Dorsolateral prefrontal cortex (tissue), 120 donors: ENCODE measurements at regions of chr6 and their contacts with region 1.

Region 1: GRCh38 chr6:33454009-33454946 is at the start of gene ZBTB9:
- DNase-seq: peak; percentile 95 to 99 (median 96)
- H3K4me3 ChIP-seq: peak within 1 kb of the TSS; percentile 54 to 99 (median 88)
- H3K27ac ChIP-seq: peak within 1 kb of the TSS in 57 of 59 donors; percentile 7 to 90 (median 73)
- H3K27me3 ChIP-seq: no peaks in the 10 kb centered on the region
- CTCF ChIP-seq: peak in 39 of 56 donors; percentile 9 to 59 (median 32)
- total RNA-seq, gene ZBTB9: 1.9 to 15.2 (median 6.9) TPM

Region 2: GRCh38 chr6:33075568-33076405 is 378.5 kb before region 1 on chr6 and contains the start of gene HLA-DPB1:
- intact Hi-C with region 1: no loop called
- DNase-seq: peak in 1 of 10 donors; percentile 15
- H3K4me3 ChIP-seq: peak within 1 kb of the TSS in 55 of 59 donors; percentile 5 to 61 (median 40)
- H3K27ac ChIP-seq: peak within 1 kb of the TSS in 39 of 59 donors; percentile 10 to 80 (median 50)
- H3K27me3 ChIP-seq: peaks cover 0 to 44% (median 0%) of the 10 kb centered on the region in 45 donors
- CTCF ChIP-seq: no peak
- total RNA-seq, gene HLA-DPB1: 14.1 to 88.3 (median 30.5) TPM

Region 3: DNA sequence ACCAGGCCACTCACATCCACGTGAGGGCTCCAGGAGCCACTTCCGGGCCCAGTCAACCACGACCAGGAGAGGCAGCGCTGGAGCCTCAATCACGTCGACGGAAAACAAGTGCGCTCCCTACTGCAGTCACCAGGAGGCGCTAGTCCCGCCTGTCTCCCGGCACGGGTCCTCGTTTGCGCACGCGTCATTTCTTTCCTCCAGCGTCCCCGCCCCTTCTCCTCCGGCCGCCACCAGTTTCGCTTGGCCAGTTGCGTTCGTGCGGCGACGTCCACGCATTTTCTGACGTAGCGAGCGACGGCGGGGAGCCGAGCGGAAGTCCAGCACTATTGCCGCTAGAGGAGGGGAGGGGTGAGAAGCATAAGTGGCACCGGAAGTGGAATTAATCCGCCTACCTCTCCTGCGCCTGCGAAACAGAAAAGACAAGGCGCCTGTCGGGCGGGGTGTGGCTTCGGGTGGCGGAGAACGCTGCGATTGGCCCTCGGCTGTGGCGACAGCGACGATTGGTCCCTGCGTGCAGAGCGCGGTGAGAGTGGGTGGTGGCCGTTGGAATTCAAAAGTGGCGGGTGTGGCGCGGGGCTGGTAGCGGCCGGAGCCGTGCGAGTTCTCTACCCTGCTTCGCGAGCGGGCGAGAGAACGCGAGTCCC is 62.9 kb before region 1 on chr6 and contains the start of gene KIFC1:
- intact Hi-C with region 1: loop called in 1 of 2 experiments (anchors 1 kb)
- DNase-seq: peak; percentile 97 to 100 (median 99)
- H3K4me3 ChIP-seq: peak within 1 kb of the TSS; percentile 25 to 78 (median 62)
- H3K27ac ChIP-seq: peak within 1 kb of the TSS; percentile 78 to 99 (median 95)
- H3K27me3 ChIP-seq: no peaks in the 10 kb centered on the region
- CTCF ChIP-seq: peak; percentile 96 to 100 (median 99)
- total RNA-seq, gene KIFC1: 0.11 to 3.3 (median 0.62) TPM in 96 of 120 experiments, not detected in the others

Region 4: DNA sequence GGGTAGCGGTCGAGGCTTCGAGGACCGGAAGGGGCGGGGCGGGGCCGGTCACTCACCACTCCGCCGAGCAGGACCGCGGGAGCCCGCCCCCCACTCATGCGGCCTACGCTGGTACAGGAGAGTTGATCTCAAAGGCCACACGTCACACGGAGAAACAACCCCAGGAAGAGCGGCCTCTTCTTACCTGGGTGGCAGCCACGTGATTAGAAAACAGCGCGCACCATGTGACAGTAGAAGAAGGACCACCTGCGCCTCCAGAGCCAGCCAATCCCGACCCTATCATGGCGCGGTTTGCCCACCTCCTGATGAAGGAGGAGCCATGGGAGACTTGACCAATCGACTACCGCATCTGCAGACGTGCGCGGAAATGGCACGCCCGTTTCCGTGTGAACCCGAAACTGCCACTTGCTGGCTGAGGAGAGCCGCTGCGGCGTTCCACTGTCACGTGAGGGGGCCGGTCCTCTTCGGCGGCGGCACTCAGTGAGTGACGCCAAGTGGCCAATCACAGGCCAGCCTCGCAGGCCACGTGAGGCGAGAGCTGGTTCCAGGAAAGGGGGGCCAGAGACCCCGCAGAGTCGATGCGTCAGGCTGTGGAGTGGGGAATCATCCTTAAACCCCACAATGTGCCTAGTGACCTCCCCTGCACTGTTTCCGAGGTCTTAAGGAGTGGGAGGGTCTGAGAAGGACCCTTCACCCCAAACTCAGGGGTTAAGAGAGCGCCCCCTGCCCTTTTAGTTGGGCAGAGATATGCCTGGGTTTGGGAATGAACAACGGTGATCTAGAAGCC is 36.2 kb before region 1 on chr6 and contains the start of gene CUTA:
- intact Hi-C with region 1: loop called in 1 of 2 experiments (anchors 5 kb)
- DNase-seq: peak; percentile 100
- H3K4me3 ChIP-seq: peak within 1 kb of the TSS; percentile 57 to 97 (median 86)
- H3K27ac ChIP-seq: peak within 1 kb of the TSS; percentile 52 to 99 (median 97)
- H3K27me3 ChIP-seq: no peaks in the 10 kb centered on the region
- CTCF ChIP-seq: peak in 55 of 56 donors; percentile 31 to 79 (median 62)
- total RNA-seq, gene CUTA: 118 to 222 (median 177) TPM

Region 5: DNA sequence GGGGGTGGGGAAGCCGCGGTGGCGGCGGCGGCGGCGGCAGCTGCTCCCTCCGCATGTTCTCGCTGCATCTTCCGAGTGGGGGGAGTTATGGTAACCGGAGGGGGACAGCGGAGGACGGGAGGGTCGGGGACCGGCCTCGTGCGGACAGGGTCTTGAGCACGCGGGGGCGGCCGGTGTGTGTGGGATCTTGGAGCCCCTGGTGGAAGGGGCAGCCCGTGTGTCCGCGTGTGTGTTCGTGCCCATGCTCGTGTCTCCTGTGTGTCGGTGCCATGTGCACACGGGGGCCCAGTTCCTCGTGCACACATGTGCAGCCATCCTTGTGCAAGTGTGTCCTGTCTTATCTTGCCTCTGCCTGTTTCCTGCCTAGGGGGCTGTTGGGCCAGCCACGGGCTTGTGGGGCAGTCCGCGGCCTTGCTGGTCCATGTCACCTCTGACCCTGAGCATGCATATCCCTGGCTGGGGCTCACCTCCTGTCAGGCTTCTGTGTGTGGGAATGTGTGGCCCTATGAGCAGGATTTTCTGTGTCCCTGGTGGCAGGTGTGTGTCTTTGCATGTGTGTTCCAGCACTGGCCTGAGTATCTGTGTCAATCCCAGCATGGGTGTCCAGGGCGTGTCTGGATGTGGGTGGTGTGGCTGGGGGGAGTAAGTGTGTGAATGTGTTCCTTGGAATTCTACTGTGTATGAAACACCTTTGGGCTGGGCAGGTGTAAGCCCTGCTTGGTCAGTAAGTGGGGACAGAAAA is 25.9 kb before region 1 on chr6:
- intact Hi-C with region 1: loop called in 1 of 2 experiments (anchors 2 kb)
- DNase-seq: no peak
- H3K4me3 ChIP-seq: peak overlapping the region in 58 of 59 donors; percentile 39 to 80 (median 66)
- H3K27ac ChIP-seq: peak overlapping the region; percentile 23 to 98 (median 86)
- H3K27me3 ChIP-seq: no peaks in the 10 kb centered on the region
- CTCF ChIP-seq: peak in 6 of 56 donors; percentile 3 to 33 (median 16)

Region 6: DNA sequence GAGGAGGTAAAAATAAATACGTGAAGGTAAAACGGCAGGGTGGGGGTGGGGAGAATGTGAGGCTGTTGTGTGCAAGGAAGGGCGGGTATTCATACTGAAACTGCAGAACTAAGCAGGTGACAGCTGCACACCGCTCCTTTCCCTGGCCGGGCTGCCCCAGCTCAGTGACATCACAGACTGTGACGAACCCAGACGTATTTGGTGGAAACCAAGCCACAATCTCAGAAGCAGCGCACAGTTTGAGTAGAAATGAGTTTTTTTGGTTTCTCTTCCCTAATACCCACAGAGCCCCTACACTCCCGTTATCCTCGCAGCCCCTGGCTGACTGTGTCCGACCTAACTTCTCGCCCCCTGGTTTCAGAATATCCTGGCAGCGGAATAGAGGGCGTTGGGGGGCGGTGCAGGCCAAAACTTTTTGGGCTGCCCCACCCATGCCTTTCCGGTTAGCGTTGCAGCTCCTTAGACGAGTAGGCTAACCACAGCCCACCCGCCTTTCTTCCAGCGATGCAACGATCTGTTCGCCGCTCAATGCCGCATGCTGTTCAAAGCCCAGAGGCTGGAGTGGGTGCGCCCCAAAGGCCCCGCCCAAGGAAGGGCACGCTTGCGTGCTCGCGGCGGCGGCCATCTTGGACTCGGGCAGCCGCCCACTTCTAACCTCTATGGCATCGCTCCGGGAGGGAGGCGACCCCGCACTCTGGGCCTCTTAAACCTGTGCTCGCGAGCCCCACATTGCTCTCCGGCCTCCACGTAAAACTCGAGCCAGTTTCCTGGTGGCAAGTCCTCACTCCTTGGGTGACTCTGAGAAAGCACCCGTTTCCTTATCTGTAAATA is 116.7 kb after region 1 on chr6:
- intact Hi-C with region 1: loop called (anchors 1 to 5 kb)
- DNase-seq: peak; percentile 72 to 90 (median 84)
- H3K4me3 ChIP-seq: peak overlapping the region; percentile 58 to 95 (median 73)
- H3K27ac ChIP-seq: peak overlapping the region; percentile 59 to 97 (median 94)
- H3K27me3 ChIP-seq: no peaks in the 10 kb centered on the region
- CTCF ChIP-seq: peak in 31 of 56 donors; percentile 4 to 60 (median 27)

Region 7: GRCh38 chr6:33579828-33580714 is 125.8 kb after region 1 on chr6 and contains the start of gene BAK1:
- intact Hi-C with region 1: loop called in 1 of 2 experiments (anchors 5 kb)
- DNase-seq: peak; percentile 79 to 97 (median 94)
- H3K4me3 ChIP-seq: peak within 1 kb of the TSS; percentile 65 to 97 (median 86)
- H3K27ac ChIP-seq: peak within 1 kb of the TSS; percentile 31 to 96 (median 86)
- H3K27me3 ChIP-seq: no peaks in the 10 kb centered on the region
- CTCF ChIP-seq: peak; percentile 28 to 81 (median 66)
- total RNA-seq, gene BAK1: 6.4 to 17.0 (median 10.8) TPM

Region 8: GRCh38 chr6:33794891-33795623 is 340.8 kb after region 1 on chr6:
- intact Hi-C with region 1: loop called in 1 of 2 experiments (anchors 10 kb)
- DNase-seq: no peak
- H3K4me3 ChIP-seq: no peak overlapping the region
- H3K27ac ChIP-seq: no peak overlapping the region
- H3K27me3 ChIP-seq: peaks cover 0 to 12% (median 0%) of the 10 kb centered on the region in 45 donors
- CTCF ChIP-seq: no peak